ENCODE measurements at regions of chr19 and their contacts with region 1.

Region 1: GRCh38 chr19:15555759-15556633 is 47.7 kb downstream of the CYP4F22 start:
- DNase-seq: peak; percentile 93
- ATAC-seq: peak; percentile 87
- H3K4me3 ChIP-seq: peak overlapping the region; percentile 17 to 89 (median 51)
- H3K4me3 Mint-ChIP-seq: peak overlapping the region; percentile 91
- H3K27ac ChIP-seq: peak overlapping the region; percentile 12 to 51
- H3K27ac Mint-ChIP-seq: peak overlapping the region; percentile 78
- H3K4me1 ChIP-seq: peaks cover 19 to 21% of the 10 kb centered on the region in 2 donors
- H3K4me1 Mint-ChIP-seq: peaks cover 18% of the 10 kb centered on the region
- H3K27me3 ChIP-seq: peaks cover 0 to 33% (median 6%) of the 10 kb centered on the region in 4 experiments
- H3K27me3 Mint-ChIP-seq: peaks cover 9% of the 10 kb centered on the region
- CTCF ChIP-seq: peak; percentile 76

Region 2: GRCh38 chr19:13748169-13748828 is 1807.7 kb before region 1 on chr19:
- CTCF ChIA-PET with region 1: no interaction called
- POLR2A ChIA-PET with region 1: no interaction called
- intact Hi-C with region 1: loop called (anchors 10 kb)
- DNase-seq: no peak
- ATAC-seq: no peak
- H3K4me3 ChIP-seq: peak overlapping the region; percentile 76 to 97 (median 86)
- H3K4me3 Mint-ChIP-seq: peak overlapping the region; percentile 90
- H3K27ac ChIP-seq: peak overlapping the region; percentile 71 to 94
- H3K27ac Mint-ChIP-seq: peak overlapping the region; percentile 82
- H3K4me1 ChIP-seq: peaks cover 11 to 15% of the 10 kb centered on the region in 2 donors
- H3K4me1 Mint-ChIP-seq: peaks cover 28% of the 10 kb centered on the region
- H3K27me3 ChIP-seq: no peaks in the 10 kb centered on the region
- H3K27me3 Mint-ChIP-seq: no peaks in the 10 kb centered on the region
- CTCF ChIP-seq: no peak

Region 3: DNA sequence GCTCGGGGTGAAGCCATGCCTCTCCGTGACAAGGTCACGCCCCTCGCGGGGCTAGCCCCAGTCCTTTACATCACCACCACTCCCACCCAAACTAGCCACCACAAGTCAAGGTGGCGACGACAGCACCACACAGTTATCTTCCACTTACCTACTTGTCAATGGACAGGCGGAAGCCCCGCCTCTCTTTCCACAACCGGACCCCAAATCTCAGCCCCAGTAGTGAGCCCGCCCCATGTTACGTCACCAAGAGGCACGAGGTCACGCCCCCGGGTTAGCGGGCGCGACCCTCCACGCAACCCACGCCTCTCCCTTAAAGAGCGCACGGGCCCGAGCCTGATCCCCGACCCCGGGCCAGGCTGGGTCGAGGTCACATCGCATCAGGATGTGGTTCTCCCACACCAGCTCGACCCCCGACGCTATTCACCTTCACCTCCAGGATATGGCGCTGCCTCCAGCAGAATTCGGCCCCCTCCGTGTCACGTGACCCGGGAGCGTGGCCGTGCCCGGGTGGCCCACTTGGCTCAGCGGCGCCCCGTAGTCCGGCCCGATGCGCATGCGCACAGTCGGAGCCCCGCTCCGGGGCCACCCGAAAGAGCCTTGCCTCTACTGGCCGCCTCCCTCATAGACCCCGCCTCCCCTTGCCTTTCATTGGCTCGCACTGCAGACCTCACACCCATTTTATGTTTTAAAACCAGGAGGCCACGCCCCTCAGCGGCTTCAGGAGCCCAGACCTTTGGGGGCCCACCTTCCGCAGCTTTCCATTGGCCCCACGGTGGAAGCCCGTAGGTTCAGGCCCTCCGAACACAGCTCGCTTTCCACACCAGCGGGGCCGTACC is 430.5 kb before region 1 on chr19:
- CTCF ChIA-PET with region 1: interaction called, 3 read pairs
- POLR2A ChIA-PET with region 1: no interaction called
- intact Hi-C with region 1: loop called (anchors 1 kb)
- DNase-seq: peak; percentile 99
- ATAC-seq: peak; percentile 84
- H3K4me3 ChIP-seq: peak overlapping the region; percentile 60 to 87 (median 85)
- H3K4me3 Mint-ChIP-seq: peak overlapping the region; percentile 98
- H3K27ac ChIP-seq: peak overlapping the region; percentile 87 to 97
- H3K27ac Mint-ChIP-seq: peak overlapping the region; percentile 97
- H3K4me1 ChIP-seq: peaks cover 10 to 12% of the 10 kb centered on the region in 2 donors
- H3K4me1 Mint-ChIP-seq: peaks cover 19% of the 10 kb centered on the region
- H3K27me3 ChIP-seq: no peaks in the 10 kb centered on the region
- H3K27me3 Mint-ChIP-seq: peaks cover 9% of the 10 kb centered on the region
- CTCF ChIP-seq: no peak

Region 4: DNA sequence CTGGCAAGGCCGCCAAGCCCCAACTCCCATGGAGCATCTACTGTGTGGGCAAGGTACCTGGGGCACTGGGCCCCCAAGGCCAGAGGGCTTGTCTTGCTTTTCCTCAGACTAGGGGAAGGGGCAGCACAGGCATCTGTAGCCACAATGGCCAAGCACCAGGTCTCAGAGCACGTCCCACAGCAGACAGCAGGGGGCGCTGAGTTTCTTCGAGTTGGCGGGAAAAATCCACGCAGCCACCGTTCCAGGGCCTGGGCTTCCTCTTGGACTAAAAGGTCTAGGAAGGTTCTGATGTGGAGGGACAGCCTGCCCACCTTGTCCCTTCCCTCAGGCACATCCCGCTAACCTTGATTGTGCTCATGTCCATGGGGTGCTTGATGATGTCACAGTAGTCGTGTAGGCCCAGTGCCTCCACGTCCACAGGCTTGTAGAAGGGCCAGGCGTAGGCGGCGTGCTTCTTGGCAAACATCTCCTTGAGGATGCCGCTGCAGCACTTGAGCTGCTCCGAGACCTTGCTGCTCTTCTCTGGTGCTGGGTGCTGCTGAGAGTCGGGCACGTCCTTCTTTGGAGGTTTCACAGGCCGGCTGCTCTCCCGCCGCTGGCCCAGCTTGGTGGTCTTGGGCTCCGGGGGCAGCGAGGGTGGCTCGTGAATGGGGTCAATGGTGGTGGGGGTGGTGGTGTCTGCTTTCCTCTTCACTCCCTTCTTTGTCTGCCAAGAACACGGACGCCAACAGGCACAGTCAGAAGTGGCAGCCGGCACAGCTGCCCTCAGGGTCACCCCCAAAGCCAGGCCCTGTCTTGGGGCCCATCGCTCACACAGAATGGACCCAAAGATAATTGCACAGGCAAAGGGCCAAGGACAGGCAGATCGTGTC is 291.7 kb before region 1 on chr19:
- CTCF ChIA-PET with region 1: interaction called, 5 read pairs
- POLR2A ChIA-PET with region 1: no interaction called
- intact Hi-C with region 1: loop called (anchors 1 kb)
- DNase-seq: peak; percentile 82
- ATAC-seq: peak; percentile 67
- H3K4me3 ChIP-seq: no peak overlapping the region
- H3K4me3 Mint-ChIP-seq: no peak overlapping the region
- H3K27ac ChIP-seq: no peak overlapping the region
- H3K27ac Mint-ChIP-seq: no peak overlapping the region
- H3K4me1 ChIP-seq: no peaks in the 10 kb centered on the region
- H3K4me1 Mint-ChIP-seq: peaks cover 2% of the 10 kb centered on the region
- H3K27me3 ChIP-seq: no peaks in the 10 kb centered on the region
- H3K27me3 Mint-ChIP-seq: no peaks in the 10 kb centered on the region
- CTCF ChIP-seq: peak; percentile 90

Region 5: GRCh38 chr19:15432629-15433518 is 123.1 kb before region 1 on chr19:
- CTCF ChIA-PET with region 1: interaction called, 5 read pairs
- POLR2A ChIA-PET with region 1: interaction called, 3 read pairs
- intact Hi-C with region 1: loop called (anchors 1 kb)
- DNase-seq: peak; percentile 93
- ATAC-seq: peak; percentile 93
- H3K4me3 ChIP-seq: peak overlapping the region; percentile 71 to 93 (median 87)
- H3K4me3 Mint-ChIP-seq: peak overlapping the region; percentile 99
- H3K27ac ChIP-seq: peak overlapping the region; percentile 52 to 70
- H3K27ac Mint-ChIP-seq: peak overlapping the region; percentile 95
- H3K4me1 ChIP-seq: peaks cover 24 to 32% of the 10 kb centered on the region in 2 donors
- H3K4me1 Mint-ChIP-seq: peaks cover 27% of the 10 kb centered on the region
- H3K27me3 ChIP-seq: no peaks in the 10 kb centered on the region
- H3K27me3 Mint-ChIP-seq: no peaks in the 10 kb centered on the region
- CTCF ChIP-seq: no peak